ENCODE measurements at regions of chr11 and their contacts with region 1.

Region 1: GRCh38 chr11:44621140-44621681 is 55.7 kb downstream of the CD82 start:
- ATAC-seq: peak; percentile 71 to 85 (median 80)
- H3K4me3 ChIP-seq: no peak overlapping the region
- H3K27ac ChIP-seq: no peak overlapping the region
- H3K4me1 ChIP-seq: peaks cover 3 to 6% of the 10 kb centered on the region in 2 donors

Region 2: GRCh38 chr11:44899959-44900358 is 278.7 kb after region 1 on chr11:
- in situ Hi-C with region 1: loop called in 4 of 9 experiments (anchors 10 to 25 kb)
- ATAC-seq: peak; percentile 64 to 89 (median 82)
- H3K4me3 ChIP-seq: no peak overlapping the region
- H3K27ac ChIP-seq: no peak overlapping the region
- H3K4me1 ChIP-seq: peaks cover 5 to 10% of the 10 kb centered on the region in 2 donors

Region 3: GRCh38 chr11:45097721-45098493 is 476.7 kb after region 1 on chr11:
- in situ Hi-C with region 1: loop called in 1 of 9 experiments (anchors 25 kb)
- ATAC-seq: peak; percentile 7 to 76 (median 68)
- H3K4me3 ChIP-seq: no peak overlapping the region
- H3K27ac ChIP-seq: no peak overlapping the region
- H3K4me1 ChIP-seq: peaks cover 10 to 24% of the 10 kb centered on the region in 2 donors

Measured in motor neuron (in vitro differentiated cells).